ENCODE measurements at regions of chr5 and their contacts with region 1.

Region 1: GRCh38 chr5:73498057-73499008 is at the start of gene BTF3:
- DNase-seq: peak; percentile 96 to 100 (median 99)

Region 2: DNA sequence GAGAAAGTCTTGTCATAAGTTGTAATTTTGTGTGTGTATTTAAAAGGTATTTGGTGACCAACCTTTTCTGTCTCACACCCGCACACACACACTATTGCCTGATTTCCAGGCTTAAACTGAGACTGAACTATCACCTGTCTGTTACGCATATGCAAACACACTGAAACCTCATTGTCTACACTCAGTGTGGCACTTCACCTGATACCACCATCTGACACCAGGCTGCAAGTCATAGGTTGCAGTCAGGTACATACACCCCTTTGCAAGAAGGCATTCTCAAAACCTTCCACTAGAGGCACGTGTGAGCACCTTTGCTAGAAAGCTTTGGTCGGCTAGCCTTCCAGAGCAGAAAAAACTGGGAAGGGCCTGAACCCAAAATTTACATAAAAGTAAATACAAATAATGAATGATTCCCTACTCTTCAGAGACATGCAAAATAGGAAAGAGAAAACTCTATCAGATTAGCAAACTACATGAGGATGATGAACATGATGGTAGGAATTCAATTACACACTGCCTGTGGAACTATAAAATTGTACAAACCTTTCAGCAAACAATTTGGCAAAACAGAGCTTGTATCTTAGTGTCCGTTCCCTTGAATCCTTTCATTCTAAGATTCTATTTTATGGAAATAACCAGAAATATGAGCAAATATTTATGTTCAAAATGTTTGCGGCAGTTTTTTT is 43.8 kb before region 1 on chr5:
- intact Hi-C with region 1: no loop called
- DNase-seq: peak in 1 of 10 donors; percentile 22

Region 3: DNA sequence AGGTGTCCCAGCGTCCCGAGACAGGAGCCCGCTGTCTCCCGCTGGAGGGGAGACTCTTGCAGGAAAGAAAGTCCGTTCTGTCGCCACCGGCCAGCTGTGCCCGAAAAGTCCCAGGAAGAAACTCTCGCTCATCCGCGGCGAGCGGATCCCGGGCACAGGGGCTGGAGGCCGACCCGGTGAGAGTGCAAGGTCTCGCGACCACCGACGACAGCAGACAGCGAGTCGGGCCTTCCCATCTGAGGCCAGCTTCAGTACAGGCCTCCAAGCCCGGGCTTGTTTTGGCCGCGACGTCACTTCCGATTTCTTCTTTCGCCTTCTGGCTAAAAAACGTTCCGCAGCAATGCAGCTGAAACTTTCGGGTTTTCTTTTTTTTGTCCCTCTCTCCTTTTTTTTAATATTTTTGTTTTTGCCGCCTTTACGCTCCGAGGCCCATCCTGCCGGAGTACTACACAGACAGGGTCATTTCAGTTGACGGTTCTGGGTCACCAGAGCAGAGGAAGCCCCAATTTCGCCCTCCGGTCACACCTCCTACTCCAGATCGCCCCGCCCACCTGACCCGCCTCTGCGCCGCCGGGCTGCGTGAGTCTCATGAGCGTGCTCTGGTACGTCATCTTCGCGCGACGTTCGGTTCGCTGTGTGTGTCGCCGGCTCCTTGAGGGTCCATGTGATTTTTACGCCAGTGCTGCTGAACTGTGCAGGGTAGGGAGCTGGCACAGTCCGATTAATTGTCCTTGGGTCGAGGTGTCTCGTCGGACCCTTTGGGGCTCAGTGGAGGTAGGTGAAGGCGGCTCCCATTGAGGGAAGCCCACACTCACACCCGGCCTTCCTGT is 67.0 kb after region 1 on chr5 and contains the starts of genes ANKRA2 and UTP15:
- intact Hi-C with region 1: loop called (anchors 2 kb)
- DNase-seq: peak; percentile 93 to 100 (median 98)